ENCODE measurements at regions of chr12 and their contacts with region 1.

Region 1: DNA sequence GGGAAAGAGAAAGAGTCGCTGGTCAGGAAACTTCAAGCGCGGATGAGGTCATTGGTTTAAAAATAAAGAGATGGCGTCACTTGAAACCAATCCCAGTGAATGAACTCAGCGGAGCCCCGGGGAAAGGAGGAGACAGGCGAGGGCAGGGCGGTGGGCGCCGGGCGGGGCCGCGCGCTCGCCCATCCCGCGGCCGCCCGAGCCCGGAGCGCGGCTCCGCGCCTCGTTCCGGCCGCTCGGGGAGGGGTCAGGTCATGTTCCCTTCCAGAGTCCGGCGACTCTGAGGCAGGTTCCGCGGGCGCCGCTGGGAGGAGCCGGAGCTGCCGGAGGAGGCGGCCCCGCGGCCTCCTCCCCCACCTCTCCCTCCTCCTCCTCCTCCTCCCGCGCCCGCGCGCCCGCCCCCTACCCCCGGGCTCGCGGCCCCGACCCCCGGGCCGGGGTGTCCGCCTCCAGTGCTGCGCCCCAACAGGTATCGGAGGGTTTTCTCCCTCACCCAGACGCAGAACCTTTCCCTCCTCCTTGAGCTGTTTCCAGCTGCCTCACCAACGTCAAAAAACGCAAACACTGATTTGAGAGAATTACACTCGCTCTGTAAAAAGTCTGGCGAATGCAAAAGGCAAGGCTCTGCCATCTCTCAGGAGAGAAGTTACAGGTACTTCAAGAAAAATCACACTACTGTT is at the start of gene DUSP16:
- DNase-seq: peak; percentile 94
- H3K4me3 Mint-ChIP-seq: peak within 1 kb of the TSS; percentile 66
- H3K27ac Mint-ChIP-seq: peak within 1 kb of the TSS; percentile 93
- H3K4me1 Mint-ChIP-seq: peaks cover 28% of the 10 kb centered on the region
- H3K27me3 Mint-ChIP-seq: no peaks in the 10 kb centered on the region
- CTCF ChIP-seq: no peak
- total RNA-seq, gene DUSP16: 23.4 and 25.8 TPM in 2 replicates

Region 2: GRCh38 chr12:12376646-12377448 is 185.9 kb before region 1 on chr12:
- CTCF ChIA-PET with region 1: interaction called, 3 read pairs
- intact Hi-C with region 1: loop called (anchors 1 kb)
- DNase-seq: no peak
- H3K4me3 Mint-ChIP-seq: no peak overlapping the region
- H3K27ac Mint-ChIP-seq: no peak overlapping the region
- H3K4me1 Mint-ChIP-seq: peaks cover 25% of the 10 kb centered on the region
- H3K27me3 Mint-ChIP-seq: no peaks in the 10 kb centered on the region
- CTCF ChIP-seq: peak; percentile 23

Region 3: DNA sequence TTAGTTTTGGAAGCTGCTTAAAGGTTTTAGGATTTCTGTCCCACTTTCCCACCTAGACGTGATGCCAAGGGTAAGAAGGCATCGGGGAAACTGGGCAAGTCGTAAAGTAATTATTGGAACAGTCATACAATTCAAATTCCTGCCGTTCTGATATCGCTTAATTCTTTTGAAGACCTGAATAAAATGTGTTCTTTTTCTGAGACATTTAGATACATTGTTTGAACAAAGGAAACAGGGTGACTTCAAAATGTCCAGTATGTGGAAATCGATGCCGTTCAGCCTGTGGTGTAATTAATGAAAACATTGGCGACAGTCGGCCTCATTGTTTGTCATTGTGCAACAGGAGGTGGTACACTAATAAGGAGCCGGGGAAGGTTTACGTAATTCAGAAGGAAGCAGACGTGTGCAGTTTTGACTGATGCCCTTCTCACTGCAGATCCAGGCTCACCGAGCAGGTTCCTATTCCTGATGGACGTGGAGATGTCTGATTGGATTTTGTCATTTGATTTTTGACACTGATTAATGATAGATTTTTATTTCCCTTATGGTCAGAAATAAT is 113.2 kb before region 1 on chr12:
- CTCF ChIA-PET with region 1: no interaction called
- intact Hi-C with region 1: loop called (anchors 5 kb)
- DNase-seq: peak; percentile 80
- H3K4me3 Mint-ChIP-seq: peak overlapping the region; percentile 41
- H3K27ac Mint-ChIP-seq: peak overlapping the region; percentile 94
- H3K4me1 Mint-ChIP-seq: peaks cover 29% of the 10 kb centered on the region
- H3K27me3 Mint-ChIP-seq: no peaks in the 10 kb centered on the region
- CTCF ChIP-seq: no peak

Region 4: DNA sequence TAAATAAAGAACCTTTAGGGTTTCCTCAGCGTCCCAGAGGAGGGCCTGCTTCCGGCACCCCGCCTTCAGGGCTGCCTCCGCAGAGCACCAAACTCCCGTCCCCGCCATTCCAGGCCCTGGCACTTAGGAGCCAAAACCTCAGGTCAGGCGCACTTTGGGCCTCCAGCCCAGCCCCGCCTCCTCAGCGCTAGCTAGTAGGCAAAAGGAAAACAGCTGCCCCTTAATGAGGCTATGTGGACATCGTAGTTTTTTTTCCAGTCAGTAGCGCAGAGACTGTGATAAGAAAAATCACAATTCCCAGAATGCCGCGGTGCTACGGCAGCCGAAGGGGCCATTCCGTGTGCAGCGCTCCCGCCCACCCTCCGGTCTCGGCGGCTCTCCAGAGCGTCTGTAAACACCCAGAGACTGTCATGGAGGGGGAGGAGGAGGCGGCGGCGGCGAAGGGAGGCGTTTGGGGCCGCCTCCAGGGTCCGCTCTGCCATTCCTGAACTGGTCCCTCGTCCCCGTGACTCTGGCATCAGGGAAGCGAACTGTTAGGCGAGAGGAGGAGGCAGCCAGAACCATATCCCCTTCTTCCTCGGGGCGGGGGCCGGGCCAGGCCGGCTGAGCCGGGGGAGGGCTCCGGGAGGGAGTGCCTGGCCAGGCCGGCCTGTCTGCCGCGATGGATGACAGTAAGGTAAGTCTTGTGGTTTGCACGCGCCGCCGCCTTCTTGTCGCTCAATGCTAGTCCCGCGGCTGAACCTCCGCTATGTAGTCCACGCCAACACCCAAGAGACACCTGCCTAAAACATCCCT is 49.0 kb after region 1 on chr12 and contains the start of gene CREBL2:
- CTCF ChIA-PET with region 1: interaction called, 3 read pairs
- intact Hi-C with region 1: loop called (anchors 2 kb)
- DNase-seq: peak; percentile 88
- H3K4me3 Mint-ChIP-seq: peak within 1 kb of the TSS; percentile 94
- H3K27ac Mint-ChIP-seq: peak within 1 kb of the TSS; percentile 90
- H3K4me1 Mint-ChIP-seq: peaks cover 43% of the 10 kb centered on the region
- H3K27me3 Mint-ChIP-seq: no peaks in the 10 kb centered on the region
- CTCF ChIP-seq: no peak
- total RNA-seq, gene CREBL2: 17.0 and 20.4 TPM in 2 replicates

Region 5: DNA sequence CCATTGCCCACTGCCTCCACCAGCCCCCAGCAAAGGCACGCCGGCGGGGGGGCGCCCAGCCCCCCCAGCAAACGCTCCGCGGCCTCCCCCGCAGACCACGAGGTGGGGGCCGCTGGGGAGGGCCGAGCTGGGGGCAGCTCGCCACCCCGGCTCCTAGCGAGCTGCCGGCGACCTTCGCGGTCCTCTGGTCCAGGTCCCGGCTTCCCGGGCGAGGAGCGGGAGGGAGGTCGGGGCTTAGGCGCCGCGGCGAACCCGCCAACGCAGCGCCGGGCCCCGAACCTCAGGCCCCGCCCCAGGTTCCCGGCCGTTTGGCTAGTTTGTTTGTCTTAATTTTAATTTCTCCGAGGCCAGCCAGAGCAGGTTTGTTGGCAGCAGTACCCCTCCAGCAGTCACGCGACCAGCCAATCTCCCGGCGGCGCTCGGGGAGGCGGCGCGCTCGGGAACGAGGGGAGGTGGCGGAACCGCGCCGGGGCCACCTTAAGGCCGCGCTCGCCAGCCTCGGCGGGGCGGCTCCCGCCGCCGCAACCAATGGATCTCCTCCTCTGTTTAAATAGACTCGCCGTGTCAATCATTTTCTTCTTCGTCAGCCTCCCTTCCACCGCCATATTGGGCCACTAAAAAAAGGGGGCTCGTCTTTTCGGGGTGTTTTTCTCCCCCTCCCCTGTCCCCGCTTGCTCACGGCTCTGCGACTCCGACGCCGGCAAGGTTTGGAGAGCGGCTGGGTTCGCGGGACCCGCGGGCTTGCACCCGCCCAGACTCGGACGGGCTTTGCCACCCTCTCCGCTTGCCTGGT is 154.3 kb after region 1 on chr12 and contains the start of gene CDKN1B:
- CTCF ChIA-PET with region 1: no interaction called
- intact Hi-C with region 1: loop called (anchors 5 kb)
- DNase-seq: peak; percentile 93
- H3K4me3 Mint-ChIP-seq: peak within 1 kb of the TSS; percentile 94
- H3K27ac Mint-ChIP-seq: peak within 1 kb of the TSS; percentile 97
- H3K4me1 Mint-ChIP-seq: peaks cover 48% of the 10 kb centered on the region
- H3K27me3 Mint-ChIP-seq: no peaks in the 10 kb centered on the region
- CTCF ChIP-seq: no peak
- total RNA-seq, gene CDKN1B: 37.7 and 41.0 TPM in 2 replicates